Aorta (tissue), 5 donors: ENCODE measurements at regions of chr19 and their contacts with region 1.

Region 1: DNA sequence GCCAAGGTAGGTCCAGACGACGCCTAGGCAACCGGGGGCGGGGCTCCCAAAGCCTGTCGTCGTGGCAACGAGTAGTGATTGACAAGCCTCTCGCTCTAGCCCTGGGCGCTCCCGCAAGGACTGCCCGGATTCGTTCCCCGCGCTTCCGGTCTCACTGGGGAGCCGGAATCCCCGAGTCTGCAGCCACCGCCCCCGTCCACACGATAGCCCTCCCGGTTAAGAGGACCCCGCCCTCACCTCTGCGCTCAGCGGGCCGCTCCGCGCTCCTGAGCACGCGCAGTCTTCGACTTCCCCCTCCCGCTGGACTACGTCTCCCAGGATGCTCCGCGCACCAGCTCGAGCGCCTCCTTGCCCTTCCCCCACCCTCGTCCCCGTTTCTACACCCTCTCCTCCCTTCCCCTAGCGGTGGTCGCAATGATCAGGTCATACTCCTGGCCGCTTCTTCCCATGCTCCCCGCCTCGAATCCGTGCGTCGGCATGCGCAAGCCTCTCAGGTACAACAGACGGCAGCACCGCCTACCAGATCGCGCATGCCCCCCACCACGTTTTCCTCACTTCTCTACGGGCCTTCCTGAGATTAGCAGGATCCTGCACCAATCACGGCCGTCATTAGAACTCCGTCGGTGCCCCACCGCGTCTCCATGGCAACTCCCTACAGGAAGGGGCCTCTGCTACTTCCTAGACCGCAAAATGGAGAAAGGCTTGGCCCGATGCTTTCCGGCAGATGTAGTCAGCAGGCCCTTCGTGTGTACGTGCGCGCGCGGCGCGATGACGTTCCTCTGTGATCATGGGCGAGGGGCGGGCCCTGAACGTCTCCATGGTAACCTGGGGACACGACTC is at the start of gene MZF1:
- DNase-seq: peak; percentile 100
- ATAC-seq: peak; percentile 92
- H3K4me3 ChIP-seq: peak within 1 kb of the TSS; percentile 13 to 28
- H3K27ac ChIP-seq: peak within 1 kb of the TSS in 1 of 2 donors; percentile 81
- H3K4me1 ChIP-seq: no peaks in the 10 kb centered on the region
- H3K27me3 ChIP-seq: no peaks in the 10 kb centered on the region
- total RNA-seq, gene MZF1: 17.7 to 31.9 TPM

Region 2: DNA sequence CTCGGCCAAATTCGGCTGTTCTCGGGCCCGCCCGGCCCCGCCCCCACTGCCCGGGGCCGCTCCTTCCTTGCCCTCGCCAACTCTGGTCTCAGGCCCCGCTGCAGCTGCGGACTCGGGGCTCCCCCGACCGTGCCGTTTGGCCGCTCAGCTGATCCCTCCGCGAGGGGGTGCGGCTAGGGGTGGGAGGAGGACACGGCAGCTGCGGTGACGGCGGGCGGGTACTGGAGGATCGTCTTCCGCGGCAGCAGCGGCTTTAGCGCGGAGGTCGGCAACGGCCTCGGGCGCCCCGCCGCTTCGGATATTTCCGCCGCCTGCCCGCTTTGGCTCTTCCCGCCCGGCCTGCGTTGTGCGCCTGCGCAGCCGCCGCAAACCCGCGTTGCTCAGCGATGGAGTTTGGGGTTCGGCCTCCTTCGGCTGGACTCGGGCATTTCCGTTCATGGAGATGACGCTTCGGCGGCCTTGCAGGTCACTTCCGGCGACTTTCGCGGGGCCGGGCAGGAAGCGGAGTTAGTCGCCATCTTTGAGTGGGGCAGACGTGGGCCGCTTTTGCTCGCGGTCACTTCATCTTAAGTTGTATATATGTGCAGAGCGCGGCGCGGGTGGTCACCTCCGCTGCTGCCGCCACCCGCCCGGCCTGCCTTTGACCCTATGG is 14.3 kb before region 1 on chr19:
- intact Hi-C with region 1: loop called in 1 of 2 experiments (anchors 2 kb)
- DNase-seq: peak; percentile 99 to 100
- ATAC-seq: peak; percentile 92
- H3K4me3 ChIP-seq: peak overlapping the region; percentile 65 to 86
- H3K27ac ChIP-seq: peak overlapping the region; percentile 87 to 98
- H3K4me1 ChIP-seq: no peaks in the 10 kb centered on the region
- H3K27me3 ChIP-seq: no peaks in the 10 kb centered on the region